ENCODE measurements at regions of chr2 and their contacts with region 1.

Region 1: GRCh38 chr2:118046634-118047210 is 32.9 kb upstream of the CCDC93 start:
- DNase-seq: no peak
- H3K4me3 ChIP-seq: peak overlapping the region in 5 of 59 donors; percentile 6 to 14 (median 10)
- H3K27ac ChIP-seq: no peak overlapping the region
- H3K27me3 ChIP-seq: peaks cover 0 to 81% (median 37%) of the 10 kb centered on the region in 45 donors
- CTCF ChIP-seq: peak; percentile 48 to 86 (median 66)

Region 2: GRCh38 chr2:118186110-118186857 is 139.6 kb after region 1 on chr2:
- intact Hi-C with region 1: loop called in 1 of 2 experiments (anchors 10 kb)
- DNase-seq: peak; percentile 54 to 91 (median 87)
- H3K4me3 ChIP-seq: peak overlapping the region; percentile 45 to 84 (median 72)
- H3K27ac ChIP-seq: peak overlapping the region in 54 of 59 donors; percentile 22 to 84 (median 68)
- H3K27me3 ChIP-seq: no peaks in the 10 kb centered on the region
- CTCF ChIP-seq: peak in 40 of 56 donors; percentile 9 to 62 (median 38)

Region 3: GRCh38 chr2:118861731-118862130 is 815.0 kb after region 1 on chr2:
- intact Hi-C with region 1: loop called (anchors 2 to 5 kb)
- DNase-seq: no peak
- H3K4me3 ChIP-seq: no peak overlapping the region
- H3K27ac ChIP-seq: no peak overlapping the region
- H3K27me3 ChIP-seq: peaks cover 7 to 70% (median 45%) of the 10 kb centered on the region in 45 donors
- CTCF ChIP-seq: no peak